Naive thymus-derived CD4-positive, alpha-beta T cell (primary cell): ENCODE measurements at regions of chr11 and their contacts with region 1.

Region 1: GRCh38 chr11:112226062-112226830 is at the start of gene PTS:
- DNase-seq: peak; percentile 79 to 90 (median 88)
- ATAC-seq: peak; percentile 94
- H3K4me3 ChIP-seq: peak within 1 kb of the TSS; percentile 100
- H3K4me3 Mint-ChIP-seq: peak within 1 kb of the TSS; percentile 83 to 95 (median 91)
- H3K27ac ChIP-seq: peak within 1 kb of the TSS; percentile 95
- H3K27ac Mint-ChIP-seq: peak within 1 kb of the TSS; percentile 92 to 99 (median 98)
- H3K4me1 ChIP-seq: peaks cover 9% of the 10 kb centered on the region in 2 donors
- H3K4me1 Mint-ChIP-seq: peaks cover 11 to 38% (median 30%) of the 10 kb centered on the region in 7 donors
- H3K27me3 ChIP-seq: no peaks in the 10 kb centered on the region
- H3K27me3 Mint-ChIP-seq: peaks cover 0 to 2% (median 0%) of the 10 kb centered on the region in 5 donors
- total RNA-seq, gene PTS: 19.2 to 71.3 (median 24.0) TPM

Region 2: DNA sequence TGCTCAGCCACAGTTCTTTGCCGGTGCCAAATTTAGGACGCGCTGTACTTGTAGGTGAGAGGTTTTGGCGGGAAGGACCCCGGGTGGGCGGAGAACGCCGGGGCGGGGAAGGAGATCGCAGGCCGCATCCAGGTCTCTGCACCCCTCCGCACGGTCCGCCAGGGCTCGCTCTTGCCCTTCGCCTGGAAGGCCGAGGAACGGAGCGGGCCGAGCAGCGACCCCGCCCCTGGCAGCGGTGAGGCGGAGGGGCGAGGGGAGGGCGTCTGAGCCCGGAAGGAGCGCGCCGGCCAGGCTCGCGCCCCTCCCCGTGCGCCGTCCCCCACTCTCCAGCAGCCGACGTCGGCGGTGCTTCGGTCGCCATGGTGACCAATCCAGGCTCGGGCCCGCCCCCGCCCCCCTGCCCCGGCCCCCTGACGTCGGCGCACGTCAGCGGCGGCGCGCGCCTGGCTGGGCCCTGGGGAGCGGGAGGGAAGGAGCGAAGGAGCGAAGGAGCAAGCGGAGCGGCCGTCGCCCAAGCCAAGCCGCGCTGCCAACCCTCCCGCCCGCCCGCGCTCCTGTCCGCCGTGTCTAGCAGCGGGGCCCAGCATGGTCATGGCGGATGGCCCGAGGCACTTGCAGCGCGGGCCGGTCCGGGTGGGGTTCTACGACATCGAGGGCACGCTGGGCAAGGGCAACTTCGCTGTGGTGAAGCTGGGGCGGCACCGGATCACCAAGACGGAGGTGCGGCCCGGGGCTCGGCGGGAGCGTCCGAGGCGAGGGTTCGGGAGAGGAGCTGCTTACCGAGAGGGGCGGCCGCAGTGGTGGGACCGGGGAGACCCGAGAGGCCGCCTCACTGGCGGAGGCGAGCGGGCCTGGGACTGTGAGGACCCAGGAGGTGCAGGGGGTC is 624.0 kb before region 1 on chr11 and contains the start of gene SIK2:
- CTCF ChIA-PET with region 1: interaction called, 6 read pairs
- POLR2A ChIA-PET with region 1: no interaction called
- intact Hi-C with region 1: loop called (anchors 5 kb)
- DNase-seq: peak; percentile 77 to 90 (median 81)
- ATAC-seq: peak; percentile 93
- H3K4me3 ChIP-seq: peak within 1 kb of the TSS; percentile 77
- H3K4me3 Mint-ChIP-seq: peak within 1 kb of the TSS; percentile 92 to 99 (median 96)
- H3K27ac ChIP-seq: peak within 1 kb of the TSS; percentile 93
- H3K27ac Mint-ChIP-seq: peak within 1 kb of the TSS; percentile 84 to 99 (median 95)
- H3K4me1 ChIP-seq: peaks cover 8 to 11% of the 10 kb centered on the region in 2 donors
- H3K4me1 Mint-ChIP-seq: peaks cover 16 to 33% (median 25%) of the 10 kb centered on the region in 7 donors
- H3K27me3 ChIP-seq: no peaks in the 10 kb centered on the region
- H3K27me3 Mint-ChIP-seq: peaks cover 0 to 6% (median 0%) of the 10 kb centered on the region in 5 donors
- total RNA-seq, gene SIK2: 7.3 to 12.9 (median 9.8) TPM

Region 3: DNA sequence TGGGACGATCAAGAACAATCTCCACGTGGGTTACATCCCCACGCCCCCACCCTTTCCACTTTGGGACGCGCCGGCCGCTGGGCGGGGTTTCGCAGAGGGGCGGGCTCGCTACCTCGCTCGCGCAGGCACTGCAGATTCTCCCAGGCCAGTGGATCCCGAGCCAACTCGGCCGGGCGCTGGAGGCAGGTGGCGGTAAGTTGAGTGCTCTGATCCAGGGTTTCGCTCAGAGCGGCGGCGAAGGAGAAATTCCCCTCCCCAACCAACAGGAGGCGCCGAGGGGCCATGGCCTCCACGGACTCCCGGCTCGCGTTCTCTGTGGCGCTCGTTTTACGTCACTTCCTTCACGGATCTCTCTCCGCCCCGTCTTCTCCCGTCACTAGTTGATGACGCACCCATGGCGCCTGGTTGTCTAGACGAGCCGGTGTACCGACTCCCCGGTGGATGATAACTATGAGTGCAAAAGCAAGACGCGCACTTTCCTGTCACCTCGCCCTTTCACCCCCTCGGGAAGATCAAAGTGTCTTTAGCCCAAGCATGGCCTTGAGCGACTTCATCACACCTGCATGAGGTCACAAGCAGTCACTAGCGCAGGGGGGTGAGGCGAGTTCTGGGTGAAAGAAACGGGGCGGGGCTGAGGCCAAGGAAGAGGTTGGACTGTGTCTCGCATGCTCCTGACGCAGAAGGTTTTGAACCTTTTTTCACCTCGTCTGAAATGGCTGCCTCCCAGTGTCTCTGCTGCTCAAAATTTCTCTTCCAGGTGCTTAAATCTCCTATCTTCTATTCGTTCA is 347.2 kb before region 1 on chr11 and contains the starts of genes CFAP68 and FDXACB1:
- CTCF ChIA-PET with region 1: no interaction called
- POLR2A ChIA-PET with region 1: no interaction called
- intact Hi-C with region 1: loop called (anchors 1 kb)
- DNase-seq: peak; percentile 89 to 99 (median 98)
- ATAC-seq: peak; percentile 93
- H3K4me3 ChIP-seq: peak within 1 kb of the TSS; percentile 93
- H3K4me3 Mint-ChIP-seq: peak within 1 kb of the TSS; percentile 83 to 99 (median 95)
- H3K27ac ChIP-seq: peak within 1 kb of the TSS; percentile 96
- H3K27ac Mint-ChIP-seq: peak within 1 kb of the TSS; percentile 98 to 100 (median 100)
- H3K4me1 ChIP-seq: peaks cover 7% of the 10 kb centered on the region in 2 donors
- H3K4me1 Mint-ChIP-seq: peaks cover 9 to 32% (median 26%) of the 10 kb centered on the region in 7 donors
- H3K27me3 ChIP-seq: no peaks in the 10 kb centered on the region
- H3K27me3 Mint-ChIP-seq: no peaks in the 10 kb centered on the region
- total RNA-seq, gene CFAP68: 13.7 to 24.9 (median 18.3) TPM
- total RNA-seq, gene FDXACB1: 2.7 to 6.0 (median 5.3) TPM

Region 4: GRCh38 chr11:112024773-112025678 is 201.2 kb before region 1 on chr11 and contains the start of gene DLAT:
- CTCF ChIA-PET with region 1: no interaction called
- POLR2A ChIA-PET with region 1: no interaction called
- intact Hi-C with region 1: loop called (anchors 1 to 2 kb)
- DNase-seq: peak; percentile 66 to 87 (median 85)
- ATAC-seq: peak; percentile 95
- H3K4me3 ChIP-seq: peak within 1 kb of the TSS; percentile 100
- H3K4me3 Mint-ChIP-seq: peak within 1 kb of the TSS; percentile 97 to 100 (median 99)
- H3K27ac ChIP-seq: peak within 1 kb of the TSS; percentile 93
- H3K27ac Mint-ChIP-seq: peak within 1 kb of the TSS; percentile 96 to 100 (median 98)
- H3K4me1 ChIP-seq: peaks cover 0 to 7% of the 10 kb centered on the region in 2 donors
- H3K4me1 Mint-ChIP-seq: peaks cover 14 to 39% (median 30%) of the 10 kb centered on the region in 7 donors
- H3K27me3 ChIP-seq: no peaks in the 10 kb centered on the region
- H3K27me3 Mint-ChIP-seq: no peaks in the 10 kb centered on the region
- total RNA-seq, gene DLAT: 13.1 to 31.0 (median 17.8) TPM

Region 5: GRCh38 chr11:112121981-112122615 is 104.1 kb before region 1 on chr11:
- CTCF ChIA-PET with region 1: no interaction called
- POLR2A ChIA-PET with region 1: no interaction called
- intact Hi-C with region 1: no loop called
- DNase-seq: no peak
- ATAC-seq: no peak
- H3K4me3 ChIP-seq: no peak overlapping the region
- H3K4me3 Mint-ChIP-seq: no peak overlapping the region
- H3K27ac ChIP-seq: no peak overlapping the region
- H3K27ac Mint-ChIP-seq: peak overlapping the region in 1 of 9 donors; percentile 30
- H3K4me1 ChIP-seq: no peaks in the 10 kb centered on the region
- H3K4me1 Mint-ChIP-seq: no peaks in the 10 kb centered on the region
- H3K27me3 ChIP-seq: no peaks in the 10 kb centered on the region
- H3K27me3 Mint-ChIP-seq: no peaks in the 10 kb centered on the region

Region 6: GRCh38 chr11:112260490-112260889 is 34.2 kb after region 1 on chr11 and contains the start of gene PLET1:
- CTCF ChIA-PET with region 1: no interaction called
- POLR2A ChIA-PET with region 1: no interaction called
- intact Hi-C with region 1: no loop called
- DNase-seq: no peak
- ATAC-seq: no peak
- H3K4me3 ChIP-seq: no peak within 1 kb of the TSS
- H3K4me3 Mint-ChIP-seq: no peak within 1 kb of the TSS
- H3K27ac ChIP-seq: no peak within 1 kb of the TSS
- H3K27ac Mint-ChIP-seq: no peak within 1 kb of the TSS
- H3K4me1 ChIP-seq: no peaks in the 10 kb centered on the region
- H3K4me1 Mint-ChIP-seq: no peaks in the 10 kb centered on the region
- H3K27me3 ChIP-seq: no peaks in the 10 kb centered on the region
- H3K27me3 Mint-ChIP-seq: peaks cover 0 to 2% (median 0%) of the 10 kb centered on the region in 5 donors
- total RNA-seq, gene PLET1: not detected

Region 7: DNA sequence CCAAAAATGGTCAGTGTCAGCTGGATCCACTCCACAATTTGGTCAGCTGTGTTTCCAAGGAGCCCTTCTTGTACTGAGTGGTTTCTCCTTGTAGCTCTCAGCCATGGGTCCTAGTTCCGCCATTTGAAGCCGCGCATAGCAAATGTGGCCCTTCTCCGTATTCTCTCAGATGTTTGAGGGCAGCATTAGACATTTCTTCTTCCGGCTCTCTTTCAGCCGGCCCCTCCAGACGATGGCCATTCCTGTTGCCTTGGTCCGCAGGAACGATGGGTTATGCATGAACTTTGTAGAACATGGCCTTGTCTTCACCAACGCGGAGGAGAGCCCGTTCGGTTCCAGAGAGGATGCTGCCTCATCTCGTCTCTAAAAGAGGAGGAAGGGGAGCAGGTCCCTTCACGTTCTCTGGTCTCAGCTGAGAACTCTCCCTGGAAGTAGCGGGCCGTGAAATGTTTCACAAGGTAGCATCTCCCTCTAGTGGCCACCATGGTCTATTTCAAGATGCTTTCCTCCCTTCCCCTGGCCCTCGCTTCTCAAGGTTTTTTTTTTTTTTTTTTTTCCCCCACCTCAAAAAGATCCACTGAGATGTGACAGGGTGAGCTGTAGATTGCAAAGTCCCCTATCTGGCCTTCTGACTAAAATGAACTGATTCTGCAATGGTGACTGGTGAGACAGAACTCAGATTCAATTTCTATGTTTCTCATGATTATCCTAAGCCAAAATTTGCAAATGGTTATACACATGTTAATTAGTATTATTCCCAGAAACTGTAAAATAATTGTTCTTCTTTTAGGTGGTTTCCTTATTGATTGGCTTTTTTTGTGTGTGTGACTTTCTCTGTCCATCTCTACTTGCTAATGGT is 54.3 kb after region 1 on chr11:
- CTCF ChIA-PET with region 1: interaction called, 141 read pairs
- POLR2A ChIA-PET with region 1: interaction called, 16 read pairs
- intact Hi-C with region 1: loop called in 1 of 2 experiments (anchors 1 kb)
- DNase-seq: peak; percentile 27 to 81 (median 73)
- ATAC-seq: peak; percentile 95
- H3K4me3 ChIP-seq: peak overlapping the region; percentile 78
- H3K4me3 Mint-ChIP-seq: peak overlapping the region; percentile 91 to 97 (median 94)
- H3K27ac ChIP-seq: peak overlapping the region; percentile 31
- H3K27ac Mint-ChIP-seq: peak overlapping the region; percentile 46 to 86 (median 66)
- H3K4me1 ChIP-seq: no peaks in the 10 kb centered on the region
- H3K4me1 Mint-ChIP-seq: peaks cover 7 to 36% (median 10%) of the 10 kb centered on the region in 7 donors
- H3K27me3 ChIP-seq: no peaks in the 10 kb centered on the region
- H3K27me3 Mint-ChIP-seq: no peaks in the 10 kb centered on the region

Region 8: GRCh38 chr11:113773416-113774173 is 1547.3 kb after region 1 on chr11 and contains the start of gene ZW10:
- CTCF ChIA-PET with region 1: no interaction called
- POLR2A ChIA-PET with region 1: no interaction called
- intact Hi-C with region 1: loop called (anchors 1 to 10 kb)
- DNase-seq: peak; percentile 86 to 92 (median 91)
- ATAC-seq: peak; percentile 99
- H3K4me3 ChIP-seq: peak within 1 kb of the TSS; percentile 86
- H3K4me3 Mint-ChIP-seq: peak within 1 kb of the TSS; percentile 92 to 100 (median 98)
- H3K27ac ChIP-seq: peak within 1 kb of the TSS; percentile 81
- H3K27ac Mint-ChIP-seq: peak within 1 kb of the TSS; percentile 89 to 97 (median 95)
- H3K4me1 ChIP-seq: peaks cover 0 to 4% of the 10 kb centered on the region in 2 donors
- H3K4me1 Mint-ChIP-seq: peaks cover 19 to 39% (median 30%) of the 10 kb centered on the region in 7 donors
- H3K27me3 ChIP-seq: no peaks in the 10 kb centered on the region
- H3K27me3 Mint-ChIP-seq: peaks cover 0 to 10% (median 0%) of the 10 kb centered on the region in 5 donors
- total RNA-seq, gene ZW10: 5.0 to 19.0 (median 10.2) TPM